ENCODE measurements at regions of chr15 and their contacts with region 1.

Region 1: DNA sequence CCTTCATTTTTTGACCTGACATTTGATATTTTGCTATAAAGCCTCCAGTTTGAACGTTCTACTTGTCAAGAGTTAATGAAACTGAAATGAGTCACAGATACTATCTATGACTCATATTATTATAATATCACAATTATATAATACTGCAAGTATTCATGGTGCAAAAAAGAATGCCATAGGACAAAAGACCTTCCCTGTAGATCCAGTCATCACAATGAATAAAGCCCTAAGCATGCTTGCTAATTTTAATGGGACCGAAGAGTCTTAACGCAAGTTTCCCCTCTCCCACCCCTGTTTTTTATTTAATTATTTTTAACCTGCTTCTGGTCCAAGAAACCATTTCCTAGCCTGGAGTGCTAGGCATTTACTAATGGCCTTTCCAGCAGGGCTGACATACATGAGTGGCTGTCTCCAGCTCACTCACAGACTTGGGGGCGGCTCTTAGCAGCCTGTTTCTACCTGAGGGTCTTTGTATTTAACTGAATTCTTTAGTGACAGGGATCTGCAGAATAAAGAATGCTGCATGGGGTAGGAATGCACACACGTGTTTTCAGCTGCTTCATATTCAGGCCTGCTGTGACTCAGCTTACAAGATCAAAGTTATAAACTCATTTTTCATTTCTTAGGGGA is 61.2 kb downstream of the THBS1 start:
- DNase-seq: no peak
- ATAC-seq: peak in 2 of 4 experiments; percentile 24 to 53
- H3K4me3 ChIP-seq: no peak overlapping the region
- H3K4me3 Mint-ChIP-seq: no peak overlapping the region
- H3K27ac ChIP-seq: peak overlapping the region; percentile 22
- H3K27ac Mint-ChIP-seq: peak overlapping the region in 1 of 2 donors; percentile 39
- H3K4me1 ChIP-seq: peaks cover 0 to 3% of the 10 kb centered on the region in 2 experiments
- H3K4me1 Mint-ChIP-seq: peaks cover 0 to 49% (median 0%) of the 10 kb centered on the region in 3 donors
- H3K27me3 ChIP-seq: no peaks in the 10 kb centered on the region
- H3K27me3 Mint-ChIP-seq: peaks cover 0 to 1% of the 10 kb centered on the region in 2 donors

Region 2: GRCh38 chr15:39153058-39153714 is 488.9 kb before region 1 on chr15:
- CTCF ChIA-PET with region 1: no interaction called
- POLR2A ChIA-PET with region 1: interaction called in 1 of 2 experiments, 11 read pairs
- DNase-seq: no peak
- ATAC-seq: no peak
- H3K4me3 ChIP-seq: no peak overlapping the region
- H3K4me3 Mint-ChIP-seq: no peak overlapping the region
- H3K27ac ChIP-seq: no peak overlapping the region
- H3K27ac Mint-ChIP-seq: no peak overlapping the region
- H3K4me1 ChIP-seq: no peaks in the 10 kb centered on the region
- H3K4me1 Mint-ChIP-seq: no peaks in the 10 kb centered on the region
- H3K27me3 ChIP-seq: peaks cover 0 to 2% of the 10 kb centered on the region in 2 experiments
- H3K27me3 Mint-ChIP-seq: peaks cover 9 to 12% of the 10 kb centered on the region in 2 donors

Region 3: DNA sequence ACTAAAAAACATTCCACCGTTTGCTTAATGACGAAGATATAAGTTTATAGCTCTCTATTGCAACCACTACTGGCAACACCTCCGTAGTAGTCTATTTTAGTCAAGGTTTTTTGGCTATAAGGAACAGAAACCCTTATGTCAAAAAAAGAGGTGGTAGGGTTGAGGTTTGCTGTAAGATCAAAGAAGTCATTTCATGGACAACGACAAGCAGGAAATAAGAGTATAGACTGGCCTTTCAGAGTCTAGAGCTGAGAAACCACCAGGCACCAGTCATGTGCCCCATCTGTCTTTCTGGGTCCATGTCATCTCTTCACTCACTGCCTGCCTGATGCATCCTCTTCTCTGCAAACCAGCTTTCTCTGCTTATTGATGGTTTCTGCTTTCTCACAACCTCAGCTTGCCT is 18.6 kb before region 1 on chr15:
- CTCF ChIA-PET with region 1: interaction called in 1 of 2 experiments, 14 read pairs
- POLR2A ChIA-PET with region 1: interaction called, 3 to 10 read pairs
- DNase-seq: peak in 31 of 35 experiments; percentile 19 to 78 (median 43)
- ATAC-seq: peak; percentile 52 to 75 (median 59)
- H3K4me3 ChIP-seq: no peak overlapping the region
- H3K4me3 Mint-ChIP-seq: peak overlapping the region in 1 of 3 donors; percentile 4
- H3K27ac ChIP-seq: peak overlapping the region; percentile 90
- H3K27ac Mint-ChIP-seq: peak overlapping the region; percentile 98 to 100
- H3K4me1 ChIP-seq: peaks cover 0 to 60% of the 10 kb centered on the region in 2 experiments
- H3K4me1 Mint-ChIP-seq: peaks cover 32 to 73% (median 62%) of the 10 kb centered on the region in 3 donors
- H3K27me3 ChIP-seq: no peaks in the 10 kb centered on the region
- H3K27me3 Mint-ChIP-seq: no peaks in the 10 kb centered on the region

Region 4: DNA sequence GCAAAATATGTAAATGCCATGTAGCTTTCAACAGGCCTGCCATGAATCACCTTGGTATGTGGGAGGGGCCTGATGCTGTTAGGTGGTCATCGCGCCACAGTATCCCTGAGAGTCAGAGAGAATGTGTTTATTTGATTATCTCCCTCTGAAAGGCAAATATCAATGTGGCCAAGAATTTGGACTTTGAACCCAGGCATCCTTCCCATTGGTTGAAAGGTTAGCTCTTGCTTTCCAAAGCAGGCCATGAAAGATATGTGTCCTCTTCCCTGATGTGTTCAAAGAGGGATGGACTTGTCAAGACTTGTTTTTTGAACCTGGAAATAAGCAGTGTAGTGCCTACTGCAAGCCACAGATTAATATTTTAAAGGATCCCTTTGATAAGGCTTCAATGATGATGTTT is 360.2 kb after region 1 on chr15:
- CTCF ChIA-PET with region 1: no interaction called
- POLR2A ChIA-PET with region 1: no interaction called
- DNase-seq: no peak
- ATAC-seq: no peak
- H3K4me3 ChIP-seq: no peak overlapping the region
- H3K4me3 Mint-ChIP-seq: no peak overlapping the region
- H3K27ac ChIP-seq: no peak overlapping the region
- H3K27ac Mint-ChIP-seq: no peak overlapping the region
- H3K4me1 ChIP-seq: no peaks in the 10 kb centered on the region
- H3K4me1 Mint-ChIP-seq: no peaks in the 10 kb centered on the region
- H3K27me3 ChIP-seq: no peaks in the 10 kb centered on the region
- H3K27me3 Mint-ChIP-seq: no peaks in the 10 kb centered on the region

Measured in T-cell (primary cell).